Activated CD4-positive, alpha-beta T cell treated with anti-CD3 and anti-CD28 coated beads for 36 hours (primary cell): ENCODE measurements at regions of chr1 and their contacts with region 1.

Region 1: GRCh38 chr1:20696397-20697329 is 21.1 kb downstream of the KIF17 start:
- DNase-seq: peak; percentile 89
- ATAC-seq: peak; percentile 98
- H3K4me3 Mint-ChIP-seq: peak overlapping the region; percentile 78
- H3K27ac Mint-ChIP-seq: peak overlapping the region; percentile 65
- H3K4me1 Mint-ChIP-seq: peaks cover 2% of the 10 kb centered on the region
- H3K27me3 Mint-ChIP-seq: no peaks in the 10 kb centered on the region

Region 2: GRCh38 chr1:20569523-20570098 is 127.1 kb before region 1 on chr1:
- CTCF ChIA-PET with region 1: no interaction called
- POLR2A ChIA-PET with region 1: no interaction called
- intact Hi-C with region 1: no loop called
- DNase-seq: no peak
- ATAC-seq: no peak
- H3K4me3 Mint-ChIP-seq: no peak overlapping the region
- H3K27ac Mint-ChIP-seq: no peak overlapping the region
- H3K4me1 Mint-ChIP-seq: peaks cover 3% of the 10 kb centered on the region
- H3K27me3 Mint-ChIP-seq: peaks cover 26% of the 10 kb centered on the region

Region 3: GRCh38 chr1:20661207-20662109 is 35.2 kb before region 1 on chr1 and contains the start of gene DDOST:
- CTCF ChIA-PET with region 1: interaction called, 6 read pairs
- POLR2A ChIA-PET with region 1: no interaction called
- intact Hi-C with region 1: loop called in 1 of 2 experiments (anchors 2 kb)
- DNase-seq: peak; percentile 97
- ATAC-seq: peak; percentile 97
- H3K4me3 Mint-ChIP-seq: peak within 1 kb of the TSS; percentile 91
- H3K27ac Mint-ChIP-seq: peak within 1 kb of the TSS; percentile 100
- H3K4me1 Mint-ChIP-seq: peaks cover 35% of the 10 kb centered on the region
- H3K27me3 Mint-ChIP-seq: no peaks in the 10 kb centered on the region
- total RNA-seq, gene DDOST: 112 to 136 TPM

Region 4: GRCh38 chr1:20732588-20733360 is 36.1 kb after region 1 on chr1 and contains the start of gene SH2D5:
- CTCF ChIA-PET with region 1: interaction called, 10 read pairs
- POLR2A ChIA-PET with region 1: no interaction called
- intact Hi-C with region 1: loop called in 1 of 2 experiments (anchors 1 kb)
- DNase-seq: peak; percentile 87
- ATAC-seq: peak; percentile 88
- H3K4me3 Mint-ChIP-seq: peak within 1 kb of the TSS; percentile 74
- H3K27ac Mint-ChIP-seq: peak within 1 kb of the TSS; percentile 69
- H3K4me1 Mint-ChIP-seq: peaks cover 17% of the 10 kb centered on the region
- H3K27me3 Mint-ChIP-seq: peaks cover 21% of the 10 kb centered on the region
- total RNA-seq, gene SH2D5: 0.32 to 0.51 TPM

Region 5: DNA sequence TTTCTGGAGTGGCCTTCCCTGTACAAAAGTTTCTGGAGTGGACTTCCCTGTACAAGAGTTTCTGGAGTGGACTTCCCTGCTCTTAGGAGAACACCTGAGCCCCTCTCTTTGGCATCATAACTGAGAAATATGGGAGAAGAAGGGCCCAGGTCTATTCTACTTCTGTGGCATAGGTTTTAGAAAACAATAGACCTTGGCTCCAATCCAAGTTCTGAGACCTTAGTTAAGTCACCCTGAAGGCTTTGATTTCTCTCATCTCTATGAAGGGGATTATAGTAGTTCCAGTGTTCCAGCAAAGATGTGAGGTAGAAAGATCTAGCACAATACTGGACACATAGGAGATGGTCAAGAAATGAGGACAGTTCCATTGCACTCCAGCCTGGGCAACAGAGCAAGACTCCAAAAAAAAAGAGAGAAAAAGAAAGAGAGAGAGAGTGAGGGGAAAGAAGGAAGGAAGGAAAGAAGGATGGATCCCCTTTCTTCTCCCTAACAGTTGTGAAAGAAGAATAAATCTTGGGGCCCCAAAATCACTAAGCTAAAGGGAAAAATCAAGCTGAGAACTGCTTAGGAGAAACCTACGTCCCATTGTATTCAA is 493.3 kb after region 1 on chr1:
- CTCF ChIA-PET with region 1: interaction called, 31 read pairs
- POLR2A ChIA-PET with region 1: no interaction called
- intact Hi-C with region 1: loop called (anchors 1 kb)
- DNase-seq: no peak
- ATAC-seq: no peak
- H3K4me3 Mint-ChIP-seq: no peak overlapping the region
- H3K27ac Mint-ChIP-seq: no peak overlapping the region
- H3K4me1 Mint-ChIP-seq: peaks cover under 1% of the 10 kb centered on the region
- H3K27me3 Mint-ChIP-seq: peaks cover 6% of the 10 kb centered on the region

Region 6: DNA sequence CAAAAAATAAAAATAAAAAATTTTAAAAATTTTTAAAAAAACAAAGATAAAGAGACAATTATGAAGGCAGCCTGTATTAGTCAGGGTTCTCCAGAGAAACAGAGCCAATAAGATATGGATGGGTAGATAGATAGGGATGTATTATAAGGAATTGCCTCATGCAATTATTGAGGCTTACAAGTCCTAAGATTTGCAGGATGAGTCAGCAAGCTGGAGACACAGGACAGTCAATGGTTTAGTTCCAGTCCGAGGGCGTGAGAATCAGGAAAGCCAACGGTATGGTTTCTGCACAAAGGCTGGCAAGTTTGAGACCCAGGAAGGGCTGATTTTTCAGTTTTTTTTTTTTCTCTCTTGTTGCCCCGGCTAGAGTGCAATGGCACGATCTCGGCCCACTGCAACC is 504.1 kb after region 1 on chr1:
- CTCF ChIA-PET with region 1: interaction called, 31 read pairs
- POLR2A ChIA-PET with region 1: no interaction called
- intact Hi-C with region 1: loop called (anchors 1 kb)
- DNase-seq: no peak
- ATAC-seq: no peak
- H3K4me3 Mint-ChIP-seq: no peak overlapping the region
- H3K27ac Mint-ChIP-seq: no peak overlapping the region
- H3K4me1 Mint-ChIP-seq: no peaks in the 10 kb centered on the region
- H3K27me3 Mint-ChIP-seq: peaks cover 8% of the 10 kb centered on the region